Left cardiac atrium (tissue), 4 donors: ENCODE measurements at regions of chr5 and their contacts with region 1.

Region 1: DNA sequence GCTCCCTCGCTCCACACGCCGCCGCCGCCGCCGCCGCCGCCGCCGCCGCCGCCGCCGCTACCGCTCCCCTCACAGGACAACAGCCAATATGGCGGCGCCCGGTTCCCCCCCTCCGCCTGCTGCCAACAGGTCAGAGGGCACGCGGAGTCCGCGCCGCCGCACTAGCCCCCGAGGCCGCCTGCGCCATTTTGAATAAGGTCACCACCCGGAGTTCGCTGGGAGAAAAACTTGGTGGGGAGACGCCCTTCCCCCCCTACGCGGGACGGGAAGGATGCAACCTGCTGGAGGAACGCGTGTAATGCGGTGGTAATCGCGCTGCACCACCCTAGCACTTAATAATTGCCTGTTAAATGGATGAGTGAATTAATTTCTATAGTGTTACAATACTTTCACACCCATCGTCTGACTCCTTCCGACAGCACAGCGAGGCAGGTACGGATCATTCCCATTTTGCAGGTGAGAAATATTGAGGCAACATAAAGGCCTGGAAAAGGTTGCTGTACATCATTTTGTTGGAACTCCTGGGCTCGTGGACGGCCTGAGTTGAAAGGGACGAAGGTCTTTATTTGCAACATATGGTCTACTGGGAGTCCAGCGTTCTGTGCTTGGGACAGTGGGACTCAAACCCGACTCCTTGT is at the start of gene FAM193B:
- DNase-seq: peak; percentile 94
- ATAC-seq: peak; percentile 95 to 97
- total RNA-seq, gene FAM193B: 26.1 to 30.1 TPM

Region 2: DNA sequence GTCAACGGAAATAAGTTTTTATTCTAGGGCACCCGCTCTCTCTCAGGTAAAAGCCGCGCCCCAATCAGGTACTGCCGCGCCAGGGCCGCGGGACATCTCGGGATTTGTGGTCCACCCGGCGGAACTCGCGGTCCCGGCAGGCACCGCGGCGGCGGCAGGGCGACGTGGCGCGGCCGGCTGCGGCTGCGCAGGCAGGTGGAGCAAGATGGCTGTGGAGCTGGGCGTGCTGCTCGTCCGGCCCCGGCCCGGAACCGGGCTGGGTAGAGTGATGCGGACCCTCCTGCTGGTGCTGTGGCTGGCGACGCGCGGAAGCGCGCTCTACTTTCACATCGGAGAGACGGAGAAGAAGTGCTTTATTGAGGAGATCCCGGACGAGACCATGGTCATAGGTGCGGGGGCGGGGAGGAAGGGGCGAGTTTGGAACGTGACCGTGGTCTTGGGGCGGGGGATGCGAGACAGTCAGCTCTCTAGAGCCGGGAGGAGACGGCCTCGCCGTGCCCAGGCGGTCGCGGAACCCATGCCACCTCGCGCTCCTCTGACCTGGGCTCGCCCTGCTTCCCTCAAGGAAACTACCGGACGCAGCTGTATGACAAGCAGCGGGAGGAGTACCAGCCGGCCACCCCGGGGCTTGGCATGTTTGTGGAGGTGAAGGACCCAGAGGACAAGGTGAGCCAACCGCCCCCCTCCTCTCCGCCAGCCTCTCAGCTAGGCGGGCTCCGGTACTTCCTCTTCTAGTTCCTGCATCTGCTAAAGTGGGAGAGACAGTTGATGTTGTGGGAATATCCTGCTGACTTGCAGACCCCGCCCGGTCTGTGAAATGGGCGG is 37.6 kb after region 1 on chr5 and contains the start of gene TMED9:
- intact Hi-C with region 1: loop called in 1 of 2 experiments (anchors 5 kb)
- DNase-seq: peak; percentile 88
- ATAC-seq: peak; percentile 98 to 100
- total RNA-seq, gene TMED9: 101 to 131 TPM